ENCODE measurements at regions of chr2 and their contacts with region 1.

Region 1: DNA sequence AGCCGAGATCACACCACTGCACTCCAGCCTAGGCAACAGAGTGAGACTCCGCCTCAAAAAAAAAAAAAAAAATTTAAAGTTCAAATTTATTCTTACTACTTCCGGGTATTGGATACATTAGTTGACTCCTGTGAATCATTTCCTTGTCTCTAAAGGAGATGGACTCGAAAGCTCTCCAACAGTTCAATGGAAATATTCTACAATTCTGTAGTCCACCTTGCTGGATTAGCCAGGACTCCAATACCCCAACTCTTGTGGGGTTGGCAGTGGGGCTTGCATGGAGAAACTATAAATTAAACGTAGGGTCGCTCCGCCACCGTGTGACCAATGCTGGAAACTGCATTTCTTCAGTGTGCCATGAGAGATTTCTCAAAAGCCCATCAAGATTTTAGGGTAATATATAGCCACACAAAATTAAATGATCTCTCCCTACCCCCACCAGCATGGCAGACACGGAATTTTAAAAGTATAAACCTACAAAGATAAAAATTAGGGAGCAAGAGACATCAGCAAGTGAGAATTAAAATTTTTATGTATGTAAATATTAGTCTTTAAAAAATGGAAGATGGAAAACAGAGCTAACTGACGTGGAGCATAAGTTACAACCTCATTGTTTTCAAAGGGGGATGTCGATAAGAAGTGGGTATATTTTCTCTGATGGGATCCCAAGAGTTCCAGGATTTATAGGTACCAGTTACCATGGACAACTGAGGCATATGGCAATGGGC is 27.8 kb upstream of the GAREM2 start:
- H3K4me3 ChIP-seq: no peak overlapping the region
- H3K27ac ChIP-seq: no peak overlapping the region
- H3K4me1 ChIP-seq: 0 out of 2 replicates have a peak, but pooled peaks cover 5% of the 10 kb centered on the region
- CTCF ChIP-seq: no peak

Region 2: DNA sequence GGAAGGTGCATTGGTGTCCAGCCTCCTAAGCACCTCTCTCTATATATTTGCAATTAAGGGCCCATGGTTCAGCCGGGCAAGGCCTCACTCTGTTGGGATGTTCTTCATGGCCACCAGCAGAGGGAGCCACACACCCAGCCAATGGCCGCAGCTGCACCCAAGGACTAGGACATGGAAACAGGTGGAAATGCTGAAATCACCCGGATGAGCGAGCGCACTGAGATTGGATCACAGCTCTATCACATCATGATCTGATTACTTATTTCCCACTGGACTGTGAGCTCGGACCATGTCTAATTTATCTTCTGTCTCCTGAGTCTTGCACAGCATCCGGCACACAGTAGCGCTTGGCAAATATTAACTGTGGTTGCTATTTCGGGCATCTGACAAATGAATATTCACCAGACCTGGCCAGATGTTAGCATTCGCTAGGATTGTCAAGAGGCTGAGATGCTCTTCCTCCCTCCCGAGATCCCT is 194.0 kb before region 1 on chr2:
- CTCF ChIA-PET with region 1: interaction called, 70 read pairs
- POLR2A ChIA-PET with region 1: no interaction called
- H3K4me3 ChIP-seq: no peak overlapping the region
- H3K27ac ChIP-seq: no peak overlapping the region
- H3K4me1 ChIP-seq: no peaks in the 10 kb centered on the region
- CTCF ChIP-seq: peak; percentile 80

Region 3: GRCh38 chr2:25991965-25992364 is 153.2 kb before region 1 on chr2:
- CTCF ChIA-PET with region 1: interaction called, 35 read pairs
- POLR2A ChIA-PET with region 1: no interaction called
- H3K4me3 ChIP-seq: no peak overlapping the region
- H3K27ac ChIP-seq: no peak overlapping the region
- H3K4me1 ChIP-seq: 0 out of 2 replicates have a peak, but pooled peaks cover 3% of the 10 kb centered on the region
- CTCF ChIP-seq: no peak

Region 4: GRCh38 chr2:26000561-26001082 is 144.5 kb before region 1 on chr2:
- CTCF ChIA-PET with region 1: interaction called, 12 read pairs
- POLR2A ChIA-PET with region 1: no interaction called
- H3K4me3 ChIP-seq: no peak overlapping the region
- H3K27ac ChIP-seq: no peak overlapping the region
- H3K4me1 ChIP-seq: no peaks in the 10 kb centered on the region
- CTCF ChIP-seq: no peak

Region 5: GRCh38 chr2:26088032-26088643 is 57.0 kb before region 1 on chr2:
- CTCF ChIA-PET with region 1: interaction called, 16 read pairs
- POLR2A ChIA-PET with region 1: interaction called, 4 read pairs
- H3K4me3 ChIP-seq: no peak overlapping the region
- H3K27ac ChIP-seq: no peak overlapping the region
- H3K4me1 ChIP-seq: no peaks in the 10 kb centered on the region; the same call in 1 of the 2 replicates
- CTCF ChIP-seq: peak; percentile 43; the same call in 1 of the 2 replicates

Region 6: GRCh38 chr2:26412091-26412673 is 267.1 kb after region 1 on chr2:
- CTCF ChIA-PET with region 1: no interaction called
- POLR2A ChIA-PET with region 1: no interaction called
- H3K4me3 ChIP-seq: no peak overlapping the region
- H3K27ac ChIP-seq: no peak overlapping the region
- H3K4me1 ChIP-seq: no peaks in the 10 kb centered on the region
- CTCF ChIP-seq: no peak

Region 7: GRCh38 chr2:26509141-26509540 is 364.0 kb after region 1 on chr2:
- CTCF ChIA-PET with region 1: no interaction called
- POLR2A ChIA-PET with region 1: no interaction called
- H3K4me3 ChIP-seq: no peak overlapping the region
- H3K27ac ChIP-seq: no peak overlapping the region
- H3K4me1 ChIP-seq: no peaks in the 10 kb centered on the region
- CTCF ChIP-seq: no peak

Measured in HEK293 (cell line).